CD8-positive, alpha-beta T cell (primary cell): ENCODE measurements at regions of chr9 and their contacts with region 1.

Region 1: GRCh38 chr9:74773886-74774479 is 113.7 kb downstream of the TRPM6 start:
- DNase-seq: peak; percentile 32 to 78 (median 70)
- ATAC-seq: peak; percentile 77
- H3K4me3 ChIP-seq: no peak overlapping the region
- H3K4me3 Mint-ChIP-seq: no peak overlapping the region
- H3K27ac ChIP-seq: no peak overlapping the region
- H3K27ac Mint-ChIP-seq: no peak overlapping the region
- H3K4me1 ChIP-seq: no peaks in the 10 kb centered on the region
- H3K4me1 Mint-ChIP-seq: no peaks in the 10 kb centered on the region
- H3K27me3 ChIP-seq: no peaks in the 10 kb centered on the region
- H3K27me3 Mint-ChIP-seq: peaks cover 20% of the 10 kb centered on the region
- CTCF ChIP-seq: peak; percentile 93

Region 2: GRCh38 chr9:74630228-74630627 is 143.8 kb before region 1 on chr9:
- CTCF ChIA-PET with region 1: no interaction called
- POLR2A ChIA-PET with region 1: no interaction called
- intact Hi-C with region 1: no loop called
- DNase-seq: no peak
- ATAC-seq: no peak
- H3K4me3 ChIP-seq: no peak overlapping the region
- H3K4me3 Mint-ChIP-seq: no peak overlapping the region
- H3K27ac ChIP-seq: no peak overlapping the region
- H3K27ac Mint-ChIP-seq: no peak overlapping the region
- H3K4me1 ChIP-seq: no peaks in the 10 kb centered on the region
- H3K4me1 Mint-ChIP-seq: no peaks in the 10 kb centered on the region
- H3K27me3 ChIP-seq: no peaks in the 10 kb centered on the region
- H3K27me3 Mint-ChIP-seq: peaks cover 18% of the 10 kb centered on the region
- CTCF ChIP-seq: no peak

Region 3: DNA sequence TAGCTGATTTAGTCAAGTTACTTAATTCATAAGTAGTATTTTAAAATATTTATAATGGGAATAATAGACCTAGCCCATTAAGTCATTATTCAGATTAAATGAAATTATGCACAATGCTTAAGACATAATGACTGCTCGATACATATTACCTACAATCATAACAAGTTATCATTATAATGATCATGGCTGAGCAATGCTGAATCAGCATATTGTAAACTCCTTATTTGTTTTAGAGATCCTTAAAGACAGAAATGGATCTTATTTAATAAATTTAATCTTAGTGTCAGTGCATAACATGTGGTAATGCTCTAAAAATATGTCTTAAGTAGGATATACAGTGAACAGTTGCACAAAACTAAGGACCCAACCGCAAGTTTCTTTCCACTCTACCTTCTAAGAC is 55.3 kb before region 1 on chr9:
- CTCF ChIA-PET with region 1: no interaction called
- POLR2A ChIA-PET with region 1: no interaction called
- intact Hi-C with region 1: no loop called
- DNase-seq: no peak
- ATAC-seq: no peak
- H3K4me3 ChIP-seq: no peak overlapping the region
- H3K4me3 Mint-ChIP-seq: no peak overlapping the region
- H3K27ac ChIP-seq: no peak overlapping the region
- H3K27ac Mint-ChIP-seq: no peak overlapping the region
- H3K4me1 ChIP-seq: no peaks in the 10 kb centered on the region
- H3K4me1 Mint-ChIP-seq: no peaks in the 10 kb centered on the region
- H3K27me3 ChIP-seq: no peaks in the 10 kb centered on the region
- H3K27me3 Mint-ChIP-seq: peaks cover 4% of the 10 kb centered on the region
- CTCF ChIP-seq: no peak

Region 4: DNA sequence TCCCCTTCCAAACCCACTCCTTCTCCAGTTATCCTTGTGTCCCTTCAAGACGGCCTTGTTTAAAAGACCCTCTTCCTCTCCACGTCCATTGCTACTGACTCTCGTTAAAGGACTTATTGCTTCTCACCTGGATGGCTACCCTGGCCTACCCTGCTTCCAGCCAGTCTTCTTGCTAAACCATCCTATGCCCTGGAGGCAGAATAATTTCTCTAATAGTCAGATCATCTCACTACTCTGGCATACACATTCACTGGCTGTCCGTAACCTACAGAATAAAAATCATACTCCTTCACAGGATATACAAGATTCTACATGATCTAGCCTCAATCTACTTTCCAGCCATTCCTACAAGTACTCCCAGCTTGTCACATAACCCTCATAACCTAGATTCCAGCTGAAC is 21.1 kb after region 1 on chr9:
- CTCF ChIA-PET with region 1: interaction called, 11 read pairs
- POLR2A ChIA-PET with region 1: no interaction called
- intact Hi-C with region 1: no loop called
- DNase-seq: no peak
- ATAC-seq: no peak
- H3K4me3 ChIP-seq: no peak overlapping the region
- H3K4me3 Mint-ChIP-seq: no peak overlapping the region
- H3K27ac ChIP-seq: no peak overlapping the region
- H3K27ac Mint-ChIP-seq: no peak overlapping the region
- H3K4me1 ChIP-seq: no peaks in the 10 kb centered on the region
- H3K4me1 Mint-ChIP-seq: no peaks in the 10 kb centered on the region
- H3K27me3 ChIP-seq: no peaks in the 10 kb centered on the region
- H3K27me3 Mint-ChIP-seq: peaks cover 9% of the 10 kb centered on the region
- CTCF ChIP-seq: no peak

Region 5: DNA sequence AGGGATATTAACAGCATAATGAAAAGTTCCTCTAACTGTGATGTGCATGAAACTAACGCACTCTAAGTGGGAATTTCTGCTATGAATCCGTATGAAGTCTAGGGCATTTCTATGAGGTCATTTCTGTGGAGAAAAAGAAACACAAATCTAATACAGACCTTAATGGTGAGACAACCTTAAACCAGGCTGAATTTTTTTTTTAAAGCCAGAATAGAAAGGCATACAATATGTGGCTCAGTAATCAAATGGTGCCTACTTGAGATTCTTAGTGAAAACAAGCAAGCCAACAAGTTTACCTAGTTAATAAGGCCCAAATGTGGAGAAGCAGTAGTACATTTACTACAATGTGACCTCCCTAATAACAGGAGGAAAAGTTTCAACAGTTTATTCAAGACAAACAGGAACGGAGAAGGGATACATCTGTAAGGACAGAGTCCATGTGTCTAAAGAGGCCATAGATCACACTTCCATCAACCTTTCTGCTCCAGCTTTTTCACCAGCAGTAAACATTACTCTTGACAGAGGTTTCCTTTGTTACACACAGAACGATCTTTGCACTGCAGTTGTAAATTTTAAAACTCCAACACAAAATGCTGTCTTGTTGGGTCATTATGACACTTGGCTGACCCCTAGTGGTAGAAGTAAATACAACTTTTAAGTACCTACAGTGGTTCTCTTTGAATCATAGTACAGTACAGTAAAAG is 227.9 kb after region 1 on chr9:
- CTCF ChIA-PET with region 1: interaction called, 233 read pairs
- POLR2A ChIA-PET with region 1: no interaction called
- intact Hi-C with region 1: loop called (anchors 1 kb)
- DNase-seq: peak in 3 of 9 experiments; percentile 20 to 87 (median 82)
- ATAC-seq: peak; percentile 96
- H3K4me3 ChIP-seq: no peak overlapping the region
- H3K4me3 Mint-ChIP-seq: no peak overlapping the region
- H3K27ac ChIP-seq: no peak overlapping the region
- H3K27ac Mint-ChIP-seq: no peak overlapping the region
- H3K4me1 ChIP-seq: no peaks in the 10 kb centered on the region
- H3K4me1 Mint-ChIP-seq: peaks cover 8% of the 10 kb centered on the region
- H3K27me3 ChIP-seq: no peaks in the 10 kb centered on the region
- H3K27me3 Mint-ChIP-seq: no peaks in the 10 kb centered on the region
- CTCF ChIP-seq: peak; percentile 85

Region 6: DNA sequence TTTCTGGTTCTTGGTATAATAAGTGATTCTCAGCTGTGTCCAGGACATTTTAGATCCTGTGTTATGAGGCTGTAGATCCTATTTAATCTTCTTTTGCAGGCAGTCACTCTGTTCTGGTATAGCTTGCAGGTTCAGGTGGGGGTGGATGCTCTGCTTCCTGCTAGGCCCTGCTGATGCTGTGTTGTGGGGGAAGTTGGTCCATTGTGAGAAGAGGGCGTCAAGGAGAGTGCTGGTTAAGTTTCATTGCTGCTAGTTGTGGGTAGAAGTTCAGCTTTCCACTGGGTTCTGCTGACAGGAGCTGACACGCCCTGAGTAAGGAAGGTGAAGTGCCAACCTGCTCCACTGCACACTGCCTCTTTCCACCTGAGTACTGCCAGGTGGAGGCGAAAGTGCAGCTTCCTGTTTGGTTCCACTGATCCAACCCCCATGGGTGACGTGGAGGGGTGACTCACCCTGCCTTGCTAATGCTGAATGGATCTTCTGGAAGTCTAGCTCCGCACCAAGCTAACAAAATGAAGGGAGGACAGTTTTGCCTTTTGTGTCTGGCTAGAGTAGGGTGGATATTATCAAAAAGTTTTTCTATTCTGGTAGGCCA is 297.6 kb after region 1 on chr9:
- CTCF ChIA-PET with region 1: interaction called, 43 read pairs
- POLR2A ChIA-PET with region 1: no interaction called
- intact Hi-C with region 1: no loop called
- DNase-seq: peak in 6 of 9 experiments; percentile 44 to 75 (median 58)
- ATAC-seq: peak; percentile 97
- H3K4me3 ChIP-seq: no peak overlapping the region
- H3K4me3 Mint-ChIP-seq: no peak overlapping the region
- H3K27ac ChIP-seq: no peak overlapping the region
- H3K27ac Mint-ChIP-seq: peak overlapping the region; percentile 85
- H3K4me1 ChIP-seq: peaks cover 7% of the 10 kb centered on the region
- H3K4me1 Mint-ChIP-seq: peaks cover 17% of the 10 kb centered on the region
- H3K27me3 ChIP-seq: no peaks in the 10 kb centered on the region
- H3K27me3 Mint-ChIP-seq: no peaks in the 10 kb centered on the region
- CTCF ChIP-seq: no peak

Region 7: DNA sequence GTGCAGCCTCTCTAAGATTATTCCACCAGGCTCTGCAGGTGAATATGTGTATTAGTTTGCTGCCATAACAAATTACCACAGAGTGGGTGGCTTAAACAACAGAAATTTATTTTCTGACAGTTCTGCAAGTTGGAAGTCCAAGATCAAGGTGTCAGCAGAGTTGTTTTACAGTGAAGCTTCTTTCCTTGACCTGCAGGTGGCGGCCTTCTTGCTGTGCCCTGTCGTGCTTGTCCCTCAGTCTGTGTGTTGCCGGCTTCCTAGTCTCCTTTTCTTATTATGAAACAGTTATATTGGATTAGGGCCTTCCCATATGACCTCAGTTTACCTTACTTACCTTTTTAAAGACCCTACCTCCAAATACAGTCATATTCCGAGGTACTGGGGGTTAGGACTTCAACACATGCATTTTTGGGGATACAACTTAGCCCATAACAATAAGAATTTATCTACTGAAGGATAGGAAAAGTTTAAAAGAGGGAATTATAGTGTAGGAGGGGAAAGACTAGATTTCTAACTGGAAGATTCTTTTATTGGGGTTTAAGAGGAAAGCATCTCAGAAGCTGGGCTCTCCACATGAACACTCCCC is 411.7 kb after region 1 on chr9:
- CTCF ChIA-PET with region 1: interaction called, 4 read pairs
- POLR2A ChIA-PET with region 1: no interaction called
- intact Hi-C with region 1: loop called in 1 of 2 experiments (anchors 10 kb)
- DNase-seq: peak; percentile 3 to 63 (median 44)
- ATAC-seq: peak; percentile 66
- H3K4me3 ChIP-seq: no peak overlapping the region
- H3K4me3 Mint-ChIP-seq: no peak overlapping the region
- H3K27ac ChIP-seq: no peak overlapping the region
- H3K27ac Mint-ChIP-seq: no peak overlapping the region
- H3K4me1 ChIP-seq: peaks cover 10% of the 10 kb centered on the region
- H3K4me1 Mint-ChIP-seq: peaks cover 19% of the 10 kb centered on the region
- H3K27me3 ChIP-seq: no peaks in the 10 kb centered on the region
- H3K27me3 Mint-ChIP-seq: no peaks in the 10 kb centered on the region
- CTCF ChIP-seq: peak; percentile 69

Region 8: GRCh38 chr9:76302947-76303940 is 1529.3 kb after region 1 on chr9:
- CTCF ChIA-PET with region 1: no interaction called
- POLR2A ChIA-PET with region 1: no interaction called
- intact Hi-C with region 1: loop called (anchors 5 to 10 kb)
- DNase-seq: peak in 3 of 9 experiments; percentile 8 to 62 (median 46)
- ATAC-seq: peak; percentile 58
- H3K4me3 ChIP-seq: no peak overlapping the region
- H3K4me3 Mint-ChIP-seq: no peak overlapping the region
- H3K27ac ChIP-seq: no peak overlapping the region
- H3K27ac Mint-ChIP-seq: no peak overlapping the region
- H3K4me1 ChIP-seq: no peaks in the 10 kb centered on the region
- H3K4me1 Mint-ChIP-seq: no peaks in the 10 kb centered on the region
- H3K27me3 ChIP-seq: no peaks in the 10 kb centered on the region
- H3K27me3 Mint-ChIP-seq: peaks cover 8% of the 10 kb centered on the region
- CTCF ChIP-seq: peak; percentile 73